ENCODE measurements at regions of chr20 and their contacts with region 1.

Region 1: GRCh38 chr20:54661880-54662465 is 186.6 kb downstream of the DOK5 start:
- DNase-seq: no peak

Region 2: GRCh38 chr20:53819973-53820451 is 842.0 kb before region 1 on chr20:
- intact Hi-C with region 1: loop called in 1 of 2 experiments (anchors 5 kb)
- DNase-seq: no peak

Region 3: GRCh38 chr20:54633374-54634355 is 28.3 kb before region 1 on chr20:
- intact Hi-C with region 1: no loop called
- DNase-seq: no peak

Measured in posterior vena cava (tissue), 2 donors.